ENCODE measurements at regions of chr12 and their contacts with region 1.

Region 1: GRCh38 chr12:49331380-49332222 is 5.4 kb downstream of the C1QL4 start:
- H3K4me3 ChIP-seq: no peak overlapping the region
- H3K27ac ChIP-seq: no peak overlapping the region
- H3K4me1 ChIP-seq: peaks cover 5% of the 10 kb centered on the region; the same call in 1 of the 2 replicates
- CTCF ChIP-seq: peak; percentile 88

Region 2: DNA sequence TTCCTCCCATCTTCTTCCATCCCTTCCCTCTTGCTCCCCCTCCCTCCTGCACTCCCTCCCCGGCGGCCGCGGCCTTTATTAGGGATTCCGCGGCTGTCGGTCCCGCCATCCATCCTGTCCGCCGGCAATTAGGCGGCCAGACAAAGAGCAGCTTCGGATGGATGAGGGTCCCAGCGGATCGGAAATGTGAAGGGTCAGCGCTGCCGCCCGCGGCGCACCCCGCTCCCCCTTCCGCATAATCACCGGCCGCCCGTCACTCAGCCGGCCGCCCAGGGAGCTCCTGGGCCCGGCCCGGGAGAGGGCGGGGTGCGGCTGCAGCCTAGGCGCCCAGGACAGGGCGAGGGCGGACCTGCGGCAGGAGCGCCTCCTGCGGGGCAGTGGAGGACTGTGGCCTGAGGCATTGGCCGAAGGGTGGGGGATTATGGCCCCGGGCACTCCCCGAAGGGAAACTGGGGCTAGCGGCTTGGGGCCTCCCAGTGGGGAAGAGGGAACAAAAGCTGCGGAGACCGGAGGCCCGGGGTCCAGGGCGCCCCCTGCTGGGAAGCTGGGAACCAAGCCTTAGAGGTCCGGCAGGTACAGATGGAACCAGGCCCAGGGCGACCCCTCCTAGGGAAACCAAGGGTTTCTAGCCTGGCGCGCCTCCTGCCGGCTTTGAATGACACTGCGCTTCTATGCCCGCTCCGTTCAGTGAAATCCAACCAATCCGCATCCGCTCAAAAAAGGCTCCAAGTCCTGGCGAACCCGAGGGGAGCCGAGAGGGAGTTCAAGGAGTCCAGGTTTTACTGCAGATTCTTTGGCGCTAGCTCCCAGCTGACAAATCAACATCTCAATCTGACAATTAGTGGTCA is 10.7 kb after region 1 on chr12:
- CTCF ChIA-PET with region 1: interaction called, 92 read pairs
- POLR2A ChIA-PET with region 1: interaction called, 14 read pairs
- H3K4me3 ChIP-seq: peak overlapping the region; percentile 20
- H3K27ac ChIP-seq: peak overlapping the region; percentile 21; the same call in 1 of the 2 replicates
- H3K4me1 ChIP-seq: peaks cover 22% of the 10 kb centered on the region
- CTCF ChIP-seq: peak; percentile 88

Region 3: DNA sequence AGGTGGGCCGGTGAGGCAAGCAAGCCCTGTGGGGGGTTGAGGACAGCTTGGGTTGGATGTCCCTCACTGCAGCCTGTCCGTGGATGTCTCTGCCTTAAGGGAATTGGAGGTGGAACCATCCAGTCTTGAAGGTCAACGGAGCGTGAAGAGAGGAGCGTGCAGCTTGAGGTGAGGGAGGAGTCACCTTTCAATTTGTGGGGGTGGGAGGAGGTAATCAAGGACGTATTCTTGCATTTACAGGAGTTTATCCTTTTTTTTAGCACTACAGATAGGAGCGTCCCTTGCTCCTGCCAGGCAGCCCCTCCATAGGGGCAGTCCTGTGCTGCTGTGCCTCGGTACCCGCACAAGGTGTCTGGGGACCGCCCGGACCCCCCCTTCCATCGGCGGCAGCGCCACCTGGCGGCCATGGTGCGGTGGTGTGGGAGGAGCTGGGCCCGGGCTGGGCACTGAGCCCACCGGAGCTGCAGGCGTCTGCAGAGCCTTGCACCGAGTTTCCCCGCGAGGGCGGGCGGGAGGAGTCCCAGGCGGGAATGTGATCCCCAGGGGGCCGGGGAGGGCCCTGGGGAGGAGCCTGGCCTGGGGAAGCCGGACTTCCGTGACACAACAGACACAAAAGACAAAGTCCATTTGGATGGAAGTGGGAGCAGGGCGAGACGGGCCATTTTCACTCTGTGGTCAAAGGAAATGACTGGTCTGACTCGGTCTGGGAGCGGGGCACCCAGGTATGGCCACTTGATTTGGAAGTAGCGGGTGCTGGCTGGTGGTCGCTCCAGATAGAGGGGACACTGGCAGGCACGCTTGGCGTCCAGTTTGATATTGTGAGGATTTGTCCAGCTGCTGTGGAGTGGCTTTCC is 16.0 kb after region 1 on chr12:
- CTCF ChIA-PET with region 1: interaction called, 92 read pairs
- POLR2A ChIA-PET with region 1: interaction called, 14 read pairs
- H3K4me3 ChIP-seq: peak overlapping the region; percentile 32
- H3K27ac ChIP-seq: peak overlapping the region; percentile 80; the same call in 1 of the 2 replicates
- H3K4me1 ChIP-seq: peaks cover 21% of the 10 kb centered on the region
- CTCF ChIP-seq: peak; percentile 97

Measured in HEK293 (cell line).